PC-9 (cell line): ENCODE measurements at regions of chr2 and their contacts with region 1.

Region 1: GRCh38 chr2:20446917-20447436 is at the start of gene RHOB:
- DNase-seq: peak; percentile 96 to 98
- H3K4me3 ChIP-seq: peak within 1 kb of the TSS; percentile 97
- H3K27ac ChIP-seq: peak within 1 kb of the TSS; percentile 69
- H3K4me1 ChIP-seq: peaks cover 52% of the 10 kb centered on the region
- H3K27me3 ChIP-seq: no peaks in the 10 kb centered on the region
- CTCF ChIP-seq: no peak
- total RNA-seq, gene RHOB: 39.3 and 44.4 TPM in 2 replicates

Region 2: GRCh38 chr2:20398956-20399567 is 47.9 kb before region 1 on chr2:
- CTCF ChIA-PET with region 1: no interaction called
- POLR2A ChIA-PET with region 1: no interaction called
- intact Hi-C with region 1: loop called (anchors 1 kb)
- DNase-seq: peak in 1 of 2 experiments; percentile 34
- H3K4me3 ChIP-seq: no peak overlapping the region
- H3K27ac ChIP-seq: no peak overlapping the region
- H3K4me1 ChIP-seq: no peaks in the 10 kb centered on the region
- H3K27me3 ChIP-seq: no peaks in the 10 kb centered on the region
- CTCF ChIP-seq: no peak

Region 3: GRCh38 chr2:20496081-20496876 is 49.3 kb after region 1 on chr2:
- CTCF ChIA-PET with region 1: interaction called, 5 read pairs
- POLR2A ChIA-PET with region 1: interaction called, 67 read pairs
- intact Hi-C with region 1: loop called (anchors 1 kb)
- DNase-seq: peak; percentile 92 to 99
- H3K4me3 ChIP-seq: peak overlapping the region; percentile 33; the same call in 1 of the 2 replicates
- H3K27ac ChIP-seq: peak overlapping the region; percentile 84
- H3K4me1 ChIP-seq: peaks cover 66% of the 10 kb centered on the region
- H3K27me3 ChIP-seq: no peaks in the 10 kb centered on the region
- CTCF ChIP-seq: no peak

Region 4: DNA sequence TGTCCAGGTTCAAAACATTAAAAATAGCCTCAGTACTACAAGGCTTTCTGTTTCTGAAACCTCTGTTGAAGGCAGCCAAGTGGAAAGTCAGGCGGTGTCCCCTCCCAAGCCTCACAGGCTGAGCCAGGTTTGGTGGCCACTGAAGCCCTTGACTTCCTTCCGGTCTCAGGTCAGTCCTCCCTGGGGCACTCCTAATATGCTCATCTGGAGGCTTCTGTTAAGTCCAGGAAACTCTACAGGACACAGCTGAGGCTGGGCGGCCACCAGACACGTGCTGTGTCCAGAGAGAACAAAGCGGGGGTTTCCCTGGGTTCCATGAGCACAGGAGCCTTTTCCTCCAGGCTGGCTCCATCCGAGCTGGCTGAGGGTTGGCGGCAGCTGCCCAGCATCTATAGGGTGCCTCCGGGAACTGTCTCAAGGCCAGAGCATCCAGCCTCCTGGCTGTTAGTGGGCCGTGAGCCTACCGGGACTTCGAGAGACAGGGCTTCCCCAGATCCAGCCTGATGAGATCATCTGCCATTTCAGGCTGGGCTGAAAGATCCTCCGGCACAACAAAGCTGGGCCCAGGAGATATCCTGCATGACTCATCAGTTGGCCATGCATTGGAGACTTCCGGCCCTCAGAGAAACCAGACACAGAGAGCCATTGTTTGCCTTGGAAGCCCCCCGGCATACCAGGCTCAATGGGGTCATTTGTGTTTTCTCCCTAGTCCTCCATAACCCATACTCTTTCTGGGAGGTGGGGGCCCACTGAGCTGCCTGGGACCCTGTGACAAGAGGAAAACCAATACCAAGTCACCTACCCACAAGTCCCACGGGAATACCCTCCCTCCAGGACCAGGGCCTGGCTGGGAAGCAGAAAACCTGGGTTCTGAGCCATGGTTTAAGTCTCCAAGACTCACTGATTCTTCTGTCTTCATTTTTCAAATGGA is 132.2 kb after region 1 on chr2:
- CTCF ChIA-PET with region 1: interaction called, 5 read pairs
- POLR2A ChIA-PET with region 1: interaction called, 20 read pairs
- intact Hi-C with region 1: loop called (anchors 2 kb)
- DNase-seq: peak; percentile 76 to 89
- H3K4me3 ChIP-seq: no peak overlapping the region
- H3K27ac ChIP-seq: peak overlapping the region; percentile 94
- H3K4me1 ChIP-seq: peaks cover 64% of the 10 kb centered on the region
- H3K27me3 ChIP-seq: no peaks in the 10 kb centered on the region
- CTCF ChIP-seq: no peak

Region 5: GRCh38 chr2:20611077-20611843 is 164.3 kb after region 1 on chr2:
- CTCF ChIA-PET with region 1: interaction called, 10 read pairs
- POLR2A ChIA-PET with region 1: interaction called, 10 read pairs
- intact Hi-C with region 1: no loop called
- DNase-seq: peak in 1 of 2 experiments; percentile 74
- H3K4me3 ChIP-seq: no peak overlapping the region
- H3K27ac ChIP-seq: no peak overlapping the region
- H3K4me1 ChIP-seq: peaks cover 22% of the 10 kb centered on the region
- H3K27me3 ChIP-seq: no peaks in the 10 kb centered on the region
- CTCF ChIP-seq: no peak

Region 6: GRCh38 chr2:20650880-20651730 is 204.1 kb after region 1 on chr2 and contains the start of gene HS1BP3:
- CTCF ChIA-PET with region 1: no interaction called
- POLR2A ChIA-PET with region 1: interaction called, 25 read pairs
- intact Hi-C with region 1: no loop called
- DNase-seq: peak; percentile 56 to 91
- H3K4me3 ChIP-seq: peak within 1 kb of the TSS; percentile 69
- H3K27ac ChIP-seq: no peak within 1 kb of the TSS
- H3K4me1 ChIP-seq: peaks cover 12% of the 10 kb centered on the region
- H3K27me3 ChIP-seq: no peaks in the 10 kb centered on the region
- CTCF ChIP-seq: peak; percentile 63; the same call in 1 of the 2 replicates
- total RNA-seq, gene HS1BP3: 16.2 and 18.0 TPM in 2 replicates